ENCODE measurements at regions of chr18 and their contacts with region 1.

Region 1: DNA sequence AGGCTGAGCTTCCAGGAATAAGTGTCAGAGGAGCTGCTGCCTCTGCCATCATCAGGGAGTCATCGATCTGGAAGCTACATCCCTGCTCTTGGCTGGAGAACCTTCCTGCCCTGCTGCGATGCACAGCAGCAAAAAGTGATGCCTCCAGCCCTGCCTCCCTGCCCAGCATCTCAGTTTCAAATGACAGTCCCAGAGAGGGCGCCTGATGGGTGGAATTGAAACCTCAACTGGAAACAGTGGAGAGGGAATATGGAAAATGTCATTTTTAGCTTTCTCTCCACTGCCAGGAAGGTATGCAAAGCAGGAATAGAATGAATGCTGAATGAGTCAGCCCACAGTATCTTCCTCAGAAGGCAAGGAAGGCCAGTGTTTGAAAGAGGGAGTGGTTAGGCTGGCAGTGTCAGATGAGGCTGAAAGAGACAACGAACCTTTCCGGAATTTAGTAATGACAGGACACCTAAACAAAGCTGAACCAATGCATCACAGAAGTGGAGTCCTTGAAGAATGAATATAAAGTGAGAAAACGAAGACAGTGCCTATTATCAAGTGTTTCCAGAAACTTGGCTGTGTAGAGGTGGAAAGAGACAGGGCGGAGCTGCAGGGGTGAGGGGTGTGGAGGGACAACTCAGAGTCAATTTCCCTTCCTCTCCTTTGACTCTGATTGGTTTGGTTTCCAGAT is 153.9 kb upstream of the NDUFV2 start:
- DNase-seq: no peak
- H3K4me3 ChIP-seq: peak overlapping the region in 3 of 4 donors; percentile 15 to 29 (median 23)
- H3K27ac ChIP-seq: peak overlapping the region; percentile 88 to 92 (median 90)
- H3K4me1 ChIP-seq: peaks cover 0 to 36% (median 25%) of the 10 kb centered on the region in 4 donors
- H3K27me3 ChIP-seq: no peaks in the 10 kb centered on the region
- CTCF ChIP-seq: no peak
- EP300 ChIP-seq: peak in 3 of 4 donors; percentile 34 to 56 (median 42)
- POLR2A ChIP-seq: no peak

Region 2: DNA sequence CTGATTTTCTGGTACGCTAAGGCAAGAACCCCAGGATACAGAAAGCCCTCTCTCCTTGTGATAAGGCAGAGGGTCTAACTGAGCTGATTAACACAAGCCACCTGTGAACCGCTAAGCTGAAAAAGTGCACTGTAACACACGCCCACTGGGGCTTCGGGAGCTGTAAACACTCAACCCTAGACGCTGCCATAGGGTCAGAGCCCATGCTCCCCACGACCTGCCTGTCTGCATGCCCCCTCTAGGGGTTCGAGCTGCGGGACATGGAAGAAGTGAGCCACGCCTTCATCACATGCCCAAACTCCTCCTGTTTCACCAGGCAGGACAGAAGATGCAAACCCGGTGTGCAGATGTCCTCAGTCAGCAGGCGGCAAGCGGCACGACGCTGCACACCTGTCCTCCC is 513.2 kb before region 1 on chr18:
- intact Hi-C with region 1: no loop called
- DNase-seq: no peak
- H3K4me3 ChIP-seq: no peak overlapping the region
- H3K27ac ChIP-seq: no peak overlapping the region
- H3K4me1 ChIP-seq: no peaks in the 10 kb centered on the region
- H3K27me3 ChIP-seq: no peaks in the 10 kb centered on the region
- CTCF ChIP-seq: no peak
- EP300 ChIP-seq: no peak
- POLR2A ChIP-seq: no peak

Region 3: GRCh38 chr18:8975624-8976023 is 27.0 kb after region 1 on chr18:
- intact Hi-C with region 1: loop called (anchors 2 kb)
- DNase-seq: no peak
- H3K4me3 ChIP-seq: peak overlapping the region; percentile 3 to 32 (median 27)
- H3K27ac ChIP-seq: peak overlapping the region in 3 of 4 donors; percentile 78 to 88 (median 85)
- H3K4me1 ChIP-seq: peaks cover 0 to 71% (median 38%) of the 10 kb centered on the region in 4 donors
- H3K27me3 ChIP-seq: no peaks in the 10 kb centered on the region
- CTCF ChIP-seq: no peak
- EP300 ChIP-seq: no peak
- POLR2A ChIP-seq: no peak

Region 4: GRCh38 chr18:9191658-9192256 is 243.1 kb after region 1 on chr18:
- intact Hi-C with region 1: no loop called
- DNase-seq: no peak
- H3K4me3 ChIP-seq: no peak overlapping the region
- H3K27ac ChIP-seq: no peak overlapping the region
- H3K4me1 ChIP-seq: peaks cover 0 to 9% (median 3%) of the 10 kb centered on the region in 4 donors
- H3K27me3 ChIP-seq: no peaks in the 10 kb centered on the region
- CTCF ChIP-seq: no peak
- EP300 ChIP-seq: no peak
- POLR2A ChIP-seq: no peak

Measured in sigmoid colon (tissue), 7 donors.